Heart right ventricle (tissue), 16 donors: ENCODE measurements at regions of chr3 and their contacts with region 1.

Region 1: GRCh38 chr3:110925798-110926197 is 145.8 kb upstream of the NECTIN3 start:
- DNase-seq: peak in 1 of 2 donors; percentile 21
- ATAC-seq: peak in 2 of 8 donors; percentile 35 to 59
- H3K4me3 ChIP-seq: no peak overlapping the region
- H3K27ac ChIP-seq: no peak overlapping the region
- H3K4me1 ChIP-seq: peaks cover 0 to 3% (median 0%) of the 10 kb centered on the region in 9 donors
- H3K27me3 ChIP-seq: no peaks in the 10 kb centered on the region
- CTCF ChIP-seq: no peak

Region 2: DNA sequence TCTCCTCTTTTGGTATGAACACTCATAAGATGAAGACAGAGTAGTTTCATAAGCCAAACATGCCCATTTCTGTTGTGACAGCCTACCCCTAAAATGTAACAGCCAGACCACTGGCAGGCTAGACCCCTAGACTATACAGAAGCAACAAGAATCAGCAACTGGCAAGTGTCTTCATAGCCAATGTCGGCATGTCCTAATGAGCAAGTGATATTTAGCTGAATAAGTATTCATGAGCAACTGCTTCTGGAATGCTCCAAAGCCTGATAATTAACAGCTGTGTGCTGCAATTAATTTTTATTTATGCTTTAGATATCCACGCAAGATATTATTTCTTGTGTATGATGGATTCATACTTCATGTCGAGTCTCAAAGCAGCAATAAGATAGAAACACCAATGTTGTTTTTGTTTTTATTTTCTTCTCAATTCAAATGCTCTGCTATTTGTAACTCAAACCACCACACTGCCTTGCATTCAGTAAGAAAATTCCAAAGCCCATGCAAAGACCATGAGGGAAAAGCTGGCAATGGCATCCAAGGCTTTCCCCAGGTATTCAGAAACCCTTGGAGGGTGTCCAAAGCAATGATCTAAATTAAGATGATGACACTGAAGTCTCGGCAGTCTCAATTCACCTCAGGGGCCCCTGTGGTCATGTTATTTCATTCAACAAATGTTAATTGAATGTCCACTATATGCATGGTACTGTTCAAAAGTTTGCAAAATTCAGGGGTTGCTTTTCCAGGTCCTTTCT is 21.9 kb before region 1 on chr3:
- intact Hi-C with region 1: loop called in 1 of 10 experiments (anchors 2 kb)
- DNase-seq: no peak
- ATAC-seq: no peak
- H3K4me3 ChIP-seq: no peak overlapping the region
- H3K27ac ChIP-seq: no peak overlapping the region
- H3K4me1 ChIP-seq: no peaks in the 10 kb centered on the region
- H3K27me3 ChIP-seq: no peaks in the 10 kb centered on the region
- CTCF ChIP-seq: no peak